Endothelial cell of umbilical vein (primary cell): ENCODE measurements at regions of chr10 and their contacts with region 1.

Region 1: DNA sequence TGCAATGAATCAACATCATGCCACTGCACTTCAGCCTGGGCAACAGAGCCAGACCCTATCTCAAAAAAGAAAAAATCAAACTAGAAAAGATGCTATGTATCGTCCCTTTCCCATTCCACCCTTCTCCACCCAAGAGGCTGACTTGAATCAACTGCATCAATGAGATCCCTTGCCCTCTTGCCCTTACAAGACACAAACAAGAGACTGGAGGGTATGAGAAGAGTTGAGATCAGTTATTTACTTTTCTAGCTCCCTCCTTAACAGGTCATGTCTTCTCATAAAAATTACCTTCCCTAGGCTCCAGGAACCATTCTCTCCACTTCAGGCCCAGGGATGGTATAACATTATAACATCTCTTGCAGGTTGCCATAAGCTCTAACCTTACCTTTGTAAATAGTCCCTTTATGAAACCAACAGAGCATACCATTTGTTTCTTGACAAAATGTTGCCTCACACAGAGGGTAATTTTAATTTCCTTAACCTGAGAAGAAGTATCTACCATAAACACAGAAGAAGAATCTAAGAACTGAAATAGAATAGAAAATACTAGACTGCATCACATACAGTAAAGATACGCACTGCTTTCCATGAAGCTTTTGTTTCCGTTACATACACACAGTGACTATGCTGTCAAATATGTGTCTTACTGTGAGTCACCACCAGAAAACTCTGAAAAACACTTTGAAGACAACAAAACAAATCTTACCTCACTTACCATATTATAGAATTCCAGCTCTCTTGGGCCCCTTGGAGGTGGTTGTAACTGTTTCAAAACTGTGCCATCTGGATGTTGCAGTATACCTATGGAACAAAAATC is 30.5 kb downstream of the IPMK start:
- DNase-seq: peak; percentile 93
- H3K4me3 ChIP-seq: peak overlapping the region in 1 of 3 experiments; percentile 70
- H3K27ac ChIP-seq: peak overlapping the region; percentile 94
- H3K4me1 ChIP-seq: peaks cover 50% of the 10 kb centered on the region
- H3K27me3 ChIP-seq: no peaks in the 10 kb centered on the region
- CTCF ChIP-seq: no peak
- POLR2A ChIP-seq: no peak

Region 2: GRCh38 chr10:58070956-58071355 is 166.3 kb before region 1 on chr10:
- CTCF ChIA-PET with region 1: no interaction called
- POLR2A ChIA-PET with region 1: no interaction called
- dilution Hi-C with region 1: no loop called
- intact Hi-C with region 1: no loop called
- DNase-seq: no peak
- H3K4me3 ChIP-seq: no peak overlapping the region
- H3K27ac ChIP-seq: no peak overlapping the region
- H3K4me1 ChIP-seq: no peaks in the 10 kb centered on the region
- H3K27me3 ChIP-seq: no peaks in the 10 kb centered on the region
- CTCF ChIP-seq: no peak
- POLR2A ChIP-seq: no peak

Region 3: DNA sequence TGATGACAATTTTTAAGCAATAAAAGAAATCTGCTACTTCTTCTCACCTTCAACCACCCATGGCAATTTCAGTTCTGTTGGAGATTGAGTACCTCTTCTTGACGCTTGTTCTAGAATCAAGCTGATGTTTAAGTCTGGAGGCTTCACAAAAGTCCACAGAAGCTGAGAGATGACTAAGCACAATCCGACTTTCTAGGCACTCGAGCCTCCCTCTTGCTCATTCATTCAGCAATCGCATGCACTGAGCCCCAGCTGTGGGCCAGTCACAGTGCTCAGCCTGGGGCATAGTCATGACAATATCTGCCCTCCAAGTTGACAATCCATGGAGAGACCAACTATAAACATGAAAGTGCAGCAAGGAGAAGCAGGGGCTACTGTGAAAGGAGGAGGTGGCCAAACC is 72.7 kb before region 1 on chr10:
- CTCF ChIA-PET with region 1: no interaction called
- POLR2A ChIA-PET with region 1: no interaction called
- dilution Hi-C with region 1: no loop called
- intact Hi-C with region 1: no loop called
- DNase-seq: no peak
- H3K4me3 ChIP-seq: no peak overlapping the region
- H3K27ac ChIP-seq: no peak overlapping the region
- H3K4me1 ChIP-seq: no peaks in the 10 kb centered on the region
- H3K27me3 ChIP-seq: peaks cover 3% of the 10 kb centered on the region in 2 experiments
- CTCF ChIP-seq: no peak
- POLR2A ChIP-seq: no peak

Region 4: GRCh38 chr10:58201704-58202103 is 35.5 kb before region 1 on chr10:
- CTCF ChIA-PET with region 1: no interaction called
- POLR2A ChIA-PET with region 1: no interaction called
- dilution Hi-C with region 1: no loop called
- intact Hi-C with region 1: no loop called
- DNase-seq: no peak
- H3K4me3 ChIP-seq: no peak overlapping the region
- H3K27ac ChIP-seq: no peak overlapping the region
- H3K4me1 ChIP-seq: no peaks in the 10 kb centered on the region
- H3K27me3 ChIP-seq: no peaks in the 10 kb centered on the region
- CTCF ChIP-seq: no peak
- POLR2A ChIP-seq: no peak

Region 5: DNA sequence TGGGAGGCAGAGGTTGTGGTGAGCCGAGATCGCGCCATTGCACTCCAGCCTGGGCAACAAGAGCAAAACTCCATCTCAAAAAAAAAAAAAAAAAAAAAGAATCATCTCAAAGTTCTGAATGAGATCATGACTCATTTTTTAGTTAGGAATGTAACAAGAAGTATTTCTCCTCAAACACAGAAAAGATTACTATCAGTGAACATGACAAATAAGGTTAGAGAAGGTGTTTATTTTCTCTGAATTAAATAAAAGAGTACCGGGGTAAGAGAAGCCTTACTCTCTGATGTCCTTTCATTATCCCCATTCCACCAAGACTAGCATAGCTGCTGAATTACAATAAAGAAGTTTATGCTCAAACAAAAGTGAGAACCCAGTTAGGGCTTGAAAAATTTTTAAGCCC is 19.6 kb before region 1 on chr10:
- CTCF ChIA-PET with region 1: no interaction called
- POLR2A ChIA-PET with region 1: no interaction called
- dilution Hi-C with region 1: no loop called
- intact Hi-C with region 1: loop called (anchors 2 kb)
- DNase-seq: peak; percentile 11
- H3K4me3 ChIP-seq: no peak overlapping the region
- H3K27ac ChIP-seq: no peak overlapping the region
- H3K4me1 ChIP-seq: no peaks in the 10 kb centered on the region
- H3K27me3 ChIP-seq: no peaks in the 10 kb centered on the region
- CTCF ChIP-seq: no peak
- POLR2A ChIP-seq: no peak

Region 6: DNA sequence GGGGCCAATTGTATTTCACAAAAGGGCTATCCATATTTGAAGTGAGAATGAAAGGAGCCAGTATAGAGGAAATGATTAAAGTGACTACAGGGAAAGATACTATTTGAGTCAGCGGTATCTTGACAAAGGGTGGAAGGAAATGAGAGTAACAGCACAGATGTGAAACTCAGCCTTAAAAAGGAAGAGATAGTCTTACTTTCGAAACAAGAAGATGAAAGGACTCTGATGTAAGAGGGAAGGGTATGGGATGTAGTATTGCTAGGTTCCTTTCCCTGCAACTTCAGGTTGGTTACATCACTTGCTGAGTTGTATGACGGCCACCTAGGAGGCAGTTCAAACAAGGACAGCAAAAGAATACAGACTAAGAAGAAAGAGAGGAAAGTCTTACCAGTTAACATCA is 45.4 kb after region 1 on chr10:
- CTCF ChIA-PET with region 1: no interaction called
- POLR2A ChIA-PET with region 1: interaction called, 6 read pairs
- dilution Hi-C with region 1: no loop called
- intact Hi-C with region 1: loop called (anchors 1 kb)
- DNase-seq: peak; percentile 93
- H3K4me3 ChIP-seq: peak overlapping the region in 1 of 3 experiments; percentile 35
- H3K27ac ChIP-seq: peak overlapping the region; percentile 87
- H3K4me1 ChIP-seq: peaks cover 41% of the 10 kb centered on the region
- H3K27me3 ChIP-seq: no peaks in the 10 kb centered on the region
- CTCF ChIP-seq: no peak
- POLR2A ChIP-seq: no peak